HEK293 (cell line): ENCODE measurements at regions of chr2 and their contacts with region 1.

Region 1: DNA sequence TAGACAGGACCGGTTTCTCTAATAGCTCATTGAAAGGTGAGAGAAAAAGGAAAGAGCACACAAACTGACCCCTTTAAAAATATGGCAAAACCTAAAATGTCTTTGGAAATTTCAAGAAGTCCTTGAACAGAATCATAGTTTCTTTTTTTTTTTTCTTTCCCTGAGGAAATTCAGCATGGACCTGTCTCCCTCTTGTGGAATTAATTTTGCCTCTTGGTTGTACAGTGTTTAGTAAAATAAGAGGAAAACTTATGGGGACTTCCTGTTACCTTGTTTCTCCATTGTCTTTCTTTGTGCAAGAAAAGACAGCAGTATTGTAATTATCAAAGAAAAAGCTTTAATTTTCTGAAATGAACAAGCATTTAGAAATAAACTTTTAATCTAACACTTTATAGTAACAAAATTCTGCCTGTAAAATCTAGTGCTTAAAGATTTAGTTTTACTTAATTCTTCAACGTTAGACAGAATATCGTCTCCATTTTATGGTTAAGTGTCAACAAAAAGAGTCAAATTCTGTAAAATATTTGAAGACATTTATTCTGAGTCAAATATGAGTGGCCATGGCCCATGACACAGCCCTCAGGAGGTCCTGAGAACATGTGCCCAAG is 176.3 kb upstream of the NABP1 start:
- H3K4me3 ChIP-seq: no peak overlapping the region
- H3K27ac ChIP-seq: no peak overlapping the region
- H3K4me1 ChIP-seq: no peaks in the 10 kb centered on the region
- CTCF ChIP-seq: peak; percentile 26; the same call in 1 of the 2 replicates

Region 2: GRCh38 chr2:191150600-191151330 is 350.9 kb before region 1 on chr2 and contains the start of gene STAT4:
- CTCF ChIA-PET with region 1: interaction called, 14 read pairs
- POLR2A ChIA-PET with region 1: no interaction called
- H3K4me3 ChIP-seq: peak within 1 kb of the TSS; percentile 35
- H3K27ac ChIP-seq: no peak within 1 kb of the TSS; the same call in 1 of the 2 replicates
- H3K4me1 ChIP-seq: no peaks in the 10 kb centered on the region
- CTCF ChIP-seq: no peak

Region 3: GRCh38 chr2:191165176-191165643 is 336.5 kb before region 1 on chr2:
- CTCF ChIA-PET with region 1: interaction called, 39 read pairs
- POLR2A ChIA-PET with region 1: no interaction called
- H3K4me3 ChIP-seq: no peak overlapping the region
- H3K27ac ChIP-seq: no peak overlapping the region
- H3K4me1 ChIP-seq: peaks cover 10% of the 10 kb centered on the region; the same call in 1 of the 2 replicates
- CTCF ChIP-seq: no peak

Region 4: GRCh38 chr2:191218292-191218898 is 283.3 kb before region 1 on chr2:
- CTCF ChIA-PET with region 1: interaction called, 24 read pairs
- POLR2A ChIA-PET with region 1: no interaction called
- H3K4me3 ChIP-seq: no peak overlapping the region
- H3K27ac ChIP-seq: no peak overlapping the region
- H3K4me1 ChIP-seq: no peaks in the 10 kb centered on the region
- CTCF ChIP-seq: peak; percentile 73

Region 5: DNA sequence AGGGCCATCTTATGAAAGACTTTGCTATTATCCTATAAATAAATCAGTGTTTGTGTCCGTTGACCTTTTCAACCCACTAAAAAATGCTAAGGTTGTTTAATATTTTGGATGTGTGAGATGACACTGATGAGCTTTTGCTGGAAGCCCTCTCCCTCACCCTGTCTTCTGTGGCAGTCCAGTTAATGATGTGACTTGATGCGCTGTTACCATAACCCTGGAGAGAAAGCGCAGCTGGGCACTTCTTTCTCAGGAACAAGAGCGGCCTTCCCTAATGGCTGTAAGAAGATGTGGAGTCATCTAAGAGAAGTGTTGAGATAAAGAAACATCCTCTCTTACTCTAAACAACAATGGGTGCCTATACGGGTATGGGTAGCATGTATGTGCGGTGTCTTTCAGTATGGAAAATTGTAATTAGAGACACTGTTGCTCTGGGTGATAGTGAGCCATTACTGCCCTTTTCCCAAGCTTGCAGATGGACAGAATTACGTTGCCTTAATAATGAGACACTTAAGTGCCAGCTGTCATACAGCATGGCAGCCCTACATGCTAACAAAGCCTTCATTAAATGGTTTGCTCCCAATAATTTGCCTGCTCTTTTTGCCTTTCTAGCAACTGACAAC is 10.7 kb after region 1 on chr2:
- CTCF ChIA-PET with region 1: interaction called, 15 read pairs
- POLR2A ChIA-PET with region 1: no interaction called
- H3K4me3 ChIP-seq: no peak overlapping the region
- H3K27ac ChIP-seq: no peak overlapping the region
- H3K4me1 ChIP-seq: peaks cover 3% of the 10 kb centered on the region; the same call in 1 of the 2 replicates
- CTCF ChIP-seq: no peak